ENCODE measurements at regions of chr9 and their contacts with region 1.

Region 1: GRCh38 chr9:27473111-27473529 is 51.0 kb upstream of the IFNK start:
- DNase-seq: peak in 1 of 2 donors; percentile 21
- ATAC-seq: peak; percentile 29 to 80 (median 58)
- H3K4me3 ChIP-seq: no peak overlapping the region
- H3K27ac ChIP-seq: peak overlapping the region in 2 of 10 donors; percentile 9 to 12
- H3K4me1 ChIP-seq: peaks cover 0 to 49% (median 25%) of the 10 kb centered on the region in 9 donors
- H3K27me3 ChIP-seq: no peaks in the 10 kb centered on the region
- CTCF ChIP-seq: no peak

Region 2: GRCh38 chr9:27414220-27414761 is 58.8 kb before region 1 on chr9:
- intact Hi-C with region 1: loop called in 1 of 10 experiments (anchors 2 kb)
- DNase-seq: peak; percentile 30 to 73
- ATAC-seq: peak; percentile 55 to 92 (median 84)
- H3K4me3 ChIP-seq: peak overlapping the region in 5 of 10 donors; percentile 29 to 46 (median 33)
- H3K27ac ChIP-seq: peak overlapping the region in 3 of 10 donors; percentile 18 to 55 (median 45)
- H3K4me1 ChIP-seq: peaks cover 0 to 27% (median 15%) of the 10 kb centered on the region in 9 donors
- H3K27me3 ChIP-seq: no peaks in the 10 kb centered on the region
- CTCF ChIP-seq: no peak

Region 3: DNA sequence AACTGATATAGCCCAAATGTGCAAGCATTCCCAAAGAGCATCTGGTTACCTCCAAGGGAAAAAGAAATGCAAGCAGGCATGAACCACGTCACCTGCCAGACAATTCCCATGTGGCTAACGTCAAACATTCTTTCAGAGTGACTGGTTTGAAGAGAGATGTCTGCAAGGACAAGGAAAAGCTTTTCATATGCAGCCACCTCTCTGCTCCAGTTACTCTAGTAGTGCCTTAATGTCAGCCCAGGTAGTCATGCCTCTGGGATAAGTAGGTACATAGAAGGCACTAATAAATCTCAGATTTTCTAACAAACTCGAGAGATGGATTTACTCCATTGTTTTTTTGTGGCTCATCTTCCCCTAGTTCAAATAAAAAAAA is 45.9 kb before region 1 on chr9:
- intact Hi-C with region 1: loop called in 1 of 10 experiments (anchors 5 kb)
- DNase-seq: no peak
- ATAC-seq: peak in 3 of 8 donors; percentile 38 to 66 (median 65)
- H3K4me3 ChIP-seq: no peak overlapping the region
- H3K27ac ChIP-seq: no peak overlapping the region
- H3K4me1 ChIP-seq: peaks cover 0 to 32% (median 6%) of the 10 kb centered on the region in 9 donors
- H3K27me3 ChIP-seq: no peaks in the 10 kb centered on the region
- CTCF ChIP-seq: no peak

Region 4: GRCh38 chr9:27514551-27514950 is 41.4 kb after region 1 on chr9:
- intact Hi-C with region 1: loop called in 1 of 10 experiments (anchors 5 kb)
- DNase-seq: peak in 1 of 2 donors; percentile 13
- ATAC-seq: peak in 4 of 8 donors; percentile 37 to 62 (median 46)
- H3K4me3 ChIP-seq: no peak overlapping the region
- H3K27ac ChIP-seq: no peak overlapping the region
- H3K4me1 ChIP-seq: peaks cover 0 to 13% (median 9%) of the 10 kb centered on the region in 9 donors
- H3K27me3 ChIP-seq: no peaks in the 10 kb centered on the region
- CTCF ChIP-seq: no peak